IMR-90 (cell line): ENCODE measurements at regions of chr5 and their contacts with region 1.

Region 1: DNA sequence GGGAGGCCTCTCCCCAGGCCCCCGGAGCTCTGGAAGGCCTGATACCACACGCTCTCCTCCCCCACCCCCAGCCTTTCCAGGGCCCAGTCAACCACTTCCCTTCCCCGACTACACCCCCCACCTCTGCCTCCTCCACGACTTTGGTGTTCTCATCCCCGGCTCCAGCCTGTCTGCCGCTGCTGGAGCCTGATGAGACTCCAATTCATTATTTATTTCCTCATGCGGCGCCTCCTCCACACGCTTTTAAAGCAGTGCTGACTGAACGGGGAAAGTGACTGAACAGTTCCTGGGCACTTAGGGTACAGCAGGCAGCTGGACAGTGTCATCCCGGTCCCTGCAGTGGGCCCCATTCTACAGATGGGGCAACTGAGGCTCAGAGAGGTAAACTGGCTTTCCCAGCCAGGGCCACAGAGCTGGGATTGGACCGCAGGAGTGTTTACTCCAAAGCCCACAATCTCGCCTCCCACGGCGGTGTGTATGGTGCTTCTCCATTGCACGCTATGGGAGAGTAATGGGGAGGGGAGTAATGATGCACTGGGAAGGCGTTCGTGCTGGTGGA is 15.9 kb upstream of the RPL26L1 start:
- DNase-seq: peak; percentile 80
- ATAC-seq: peak; percentile 88
- H3K4me3 ChIP-seq: no peak overlapping the region
- H3K27ac ChIP-seq: peak overlapping the region; percentile 93
- H3K4me1 ChIP-seq: peaks cover 23% of the 10 kb centered on the region
- H3K27me3 ChIP-seq: no peaks in the 10 kb centered on the region
- CTCF ChIP-seq: no peak
- POLR2A ChIP-seq: no peak
- RAD21 ChIP-seq: peak; percentile 32

Region 2: GRCh38 chr5:171984748-171985419 is 958.5 kb before region 1 on chr5:
- CTCF ChIA-PET with region 1: no interaction called
- POLR2A ChIA-PET with region 1: no interaction called
- dilution Hi-C with region 1: no loop called
- in situ Hi-C with region 1: no loop called
- intact Hi-C with region 1: no loop called
- DNase-seq: peak; percentile 98
- ATAC-seq: peak; percentile 95
- H3K4me3 ChIP-seq: no peak overlapping the region
- H3K27ac ChIP-seq: 0 out of 2 replicates have a peak overlapping the region, but pooled peaks have one; percentile 48
- H3K4me1 ChIP-seq: peaks cover 5% of the 10 kb centered on the region
- H3K27me3 ChIP-seq: no peaks in the 10 kb centered on the region
- CTCF ChIP-seq: no peak
- POLR2A ChIP-seq: no peak
- RAD21 ChIP-seq: no peak

Region 3: GRCh38 chr5:172479044-172479783 is 464.1 kb before region 1 on chr5:
- CTCF ChIA-PET with region 1: no interaction called
- POLR2A ChIA-PET with region 1: no interaction called
- dilution Hi-C with region 1: no loop called
- in situ Hi-C with region 1: loop called (anchors 10 kb)
- intact Hi-C with region 1: loop called (anchors 10 kb)
- DNase-seq: peak; percentile 88
- ATAC-seq: peak; percentile 100
- H3K4me3 ChIP-seq: no peak overlapping the region
- H3K27ac ChIP-seq: no peak overlapping the region
- H3K4me1 ChIP-seq: no peaks in the 10 kb centered on the region
- H3K27me3 ChIP-seq: peaks cover 9% of the 10 kb centered on the region
- CTCF ChIP-seq: peak; percentile 98
- POLR2A ChIP-seq: peak; percentile 57
- RAD21 ChIP-seq: peak; percentile 96

Region 4: GRCh38 chr5:172524573-172525021 is 418.8 kb before region 1 on chr5:
- CTCF ChIA-PET with region 1: no interaction called
- POLR2A ChIA-PET with region 1: no interaction called
- dilution Hi-C with region 1: no loop called
- in situ Hi-C with region 1: no loop called
- intact Hi-C with region 1: loop called (anchors 5 kb)
- DNase-seq: no peak
- ATAC-seq: no peak
- H3K4me3 ChIP-seq: no peak overlapping the region
- H3K27ac ChIP-seq: no peak overlapping the region
- H3K4me1 ChIP-seq: no peaks in the 10 kb centered on the region
- H3K27me3 ChIP-seq: peaks cover 28% of the 10 kb centered on the region
- CTCF ChIP-seq: no peak
- POLR2A ChIP-seq: no peak
- RAD21 ChIP-seq: no peak